Activated naive CD4-positive, alpha-beta T cell treated with anti-CD3 and anti-CD28 coated beads for 36 hours (primary cell): ENCODE measurements at regions of chr2 and their contacts with region 1.

Region 1: GRCh38 chr2:159712143-159712928 is at the start of gene MARCHF7:
- DNase-seq: peak; percentile 98
- H3K4me3 Mint-ChIP-seq: peak within 1 kb of the TSS; percentile 99
- H3K27ac Mint-ChIP-seq: peak within 1 kb of the TSS; percentile 100
- H3K4me1 Mint-ChIP-seq: peaks cover 44% of the 10 kb centered on the region
- H3K27me3 Mint-ChIP-seq: no peaks in the 10 kb centered on the region
- total RNA-seq, gene MARCHF7: 81.5 to 82.4 TPM

Region 2: GRCh38 chr2:158889135-158889853 is 823.0 kb before region 1 on chr2:
- CTCF ChIA-PET with region 1: no interaction called
- intact Hi-C with region 1: loop called (anchors 2 kb)
- DNase-seq: peak; percentile 12
- H3K4me3 Mint-ChIP-seq: no peak overlapping the region
- H3K27ac Mint-ChIP-seq: peak overlapping the region; percentile 21
- H3K4me1 Mint-ChIP-seq: peaks cover 19% of the 10 kb centered on the region
- H3K27me3 Mint-ChIP-seq: peaks cover 6% of the 10 kb centered on the region

Region 3: DNA sequence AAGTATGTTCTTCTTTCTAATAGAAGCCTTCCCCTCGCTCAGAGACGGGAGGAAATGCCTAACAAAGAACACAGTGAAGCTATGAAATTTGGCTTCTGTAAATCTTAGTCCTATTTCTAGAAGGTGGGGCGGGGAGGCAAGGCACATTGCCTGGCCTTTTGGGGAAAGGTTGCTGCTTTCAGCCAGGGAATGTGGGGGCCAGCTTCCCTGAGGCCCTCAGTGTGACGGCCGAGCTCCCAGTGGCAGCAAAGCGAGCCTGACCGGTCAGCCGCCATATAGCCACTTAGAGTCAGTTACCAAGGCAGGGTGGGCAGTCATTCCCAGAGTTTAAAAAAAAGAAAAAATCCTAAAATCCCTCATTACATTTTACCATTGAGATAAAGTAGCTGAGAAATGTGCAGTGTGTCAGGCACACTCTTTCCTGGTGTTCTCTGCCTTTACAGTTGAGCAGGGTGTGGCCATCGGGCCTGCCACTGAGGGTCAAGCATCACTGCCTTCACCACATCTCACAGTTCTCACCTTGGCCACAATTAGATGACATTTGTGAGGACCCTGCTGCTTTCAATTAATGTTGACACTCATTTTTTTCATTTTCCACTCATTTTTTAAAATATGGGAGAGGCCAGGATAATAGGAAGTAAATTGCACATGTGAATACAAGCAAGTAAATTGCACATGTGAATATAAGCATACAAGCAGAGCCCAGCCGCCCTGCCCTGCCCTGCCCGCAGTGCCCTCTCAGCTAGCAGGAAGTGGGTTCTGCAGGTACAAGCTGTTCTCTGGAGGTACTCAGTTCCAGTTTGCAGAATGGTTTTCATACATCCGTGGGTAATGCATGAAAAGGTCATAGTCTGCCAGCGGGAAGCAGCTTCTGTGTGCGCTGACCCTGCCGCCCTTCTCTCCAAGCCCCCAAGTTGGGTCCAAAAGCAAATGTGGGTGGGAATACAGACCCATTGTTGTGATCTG is 502.7 kb before region 1 on chr2:
- CTCF ChIA-PET with region 1: no interaction called
- intact Hi-C with region 1: loop called (anchors 5 kb)
- DNase-seq: peak; percentile 43
- H3K4me3 Mint-ChIP-seq: no peak overlapping the region
- H3K27ac Mint-ChIP-seq: no peak overlapping the region
- H3K4me1 Mint-ChIP-seq: peaks cover 17% of the 10 kb centered on the region
- H3K27me3 Mint-ChIP-seq: no peaks in the 10 kb centered on the region

Region 4: DNA sequence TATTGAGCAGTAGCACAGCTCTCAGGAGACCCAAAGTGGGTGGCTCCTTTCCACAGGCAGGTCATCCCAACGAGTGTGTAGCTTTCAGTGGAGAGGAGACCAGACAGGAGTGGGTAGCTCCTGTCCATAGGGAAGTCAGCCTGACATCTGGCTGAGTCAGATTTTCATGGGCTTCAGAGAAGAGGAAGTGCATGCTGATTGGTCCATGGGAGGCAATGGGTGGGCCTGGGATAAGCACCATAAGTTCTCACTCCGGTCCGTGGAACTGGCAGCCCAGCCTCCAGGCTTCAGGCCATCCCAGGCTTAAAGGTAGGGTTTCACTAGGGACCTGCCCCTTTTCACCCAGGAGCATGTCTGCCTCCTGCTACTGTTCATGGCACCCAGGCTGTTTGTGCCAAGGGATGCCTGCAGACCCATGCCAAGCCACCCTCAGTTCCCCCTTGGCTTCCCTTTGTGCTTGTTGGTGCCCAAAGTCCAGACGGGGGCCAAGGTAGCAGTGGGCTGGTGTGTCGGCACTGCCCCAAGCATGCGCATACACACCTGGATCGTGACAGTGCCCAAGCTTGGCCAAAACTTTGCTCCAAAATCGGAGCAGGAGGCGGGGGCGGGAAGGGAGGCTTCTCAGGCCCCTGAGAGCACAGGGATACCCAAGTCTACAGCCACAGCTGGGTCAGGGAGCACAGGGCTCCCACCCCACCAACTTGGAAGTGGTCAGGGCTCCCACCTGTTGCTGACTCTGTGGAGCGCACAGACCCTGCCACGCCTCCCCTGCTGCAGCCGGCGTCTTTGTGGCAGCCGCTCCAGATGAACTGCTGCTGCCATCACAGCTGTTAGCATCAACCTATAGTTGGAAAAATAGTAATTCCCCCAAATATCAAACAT is 26.4 kb after region 1 on chr2:
- CTCF ChIA-PET with region 1: no interaction called
- intact Hi-C with region 1: no loop called
- DNase-seq: no peak
- H3K4me3 Mint-ChIP-seq: no peak overlapping the region
- H3K27ac Mint-ChIP-seq: no peak overlapping the region
- H3K4me1 Mint-ChIP-seq: peaks cover 31% of the 10 kb centered on the region
- H3K27me3 Mint-ChIP-seq: no peaks in the 10 kb centered on the region

Region 5: DNA sequence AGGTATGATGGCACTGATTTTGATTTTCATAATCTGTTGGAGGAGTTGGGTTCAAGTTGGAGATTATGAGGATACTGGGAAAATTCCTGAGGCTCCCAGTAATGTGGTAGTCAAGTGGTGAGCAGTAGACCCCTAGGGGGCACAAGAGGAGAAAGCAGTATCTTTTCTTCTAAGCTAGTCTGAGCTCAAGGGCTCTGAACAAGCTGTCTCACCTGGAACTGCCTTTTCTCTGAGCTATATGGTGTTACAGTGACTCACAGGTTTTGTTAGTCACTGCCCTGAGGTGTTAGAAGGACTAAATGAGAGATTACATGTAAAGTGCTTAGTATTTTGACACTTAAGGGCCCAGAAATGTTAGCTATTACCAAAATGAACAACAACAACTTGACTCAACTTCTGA is 43.5 kb after region 1 on chr2:
- CTCF ChIA-PET with region 1: interaction called, 4 read pairs
- intact Hi-C with region 1: loop called (anchors 1 kb)
- DNase-seq: peak; percentile 54
- H3K4me3 Mint-ChIP-seq: no peak overlapping the region
- H3K27ac Mint-ChIP-seq: no peak overlapping the region
- H3K4me1 Mint-ChIP-seq: peaks cover 22% of the 10 kb centered on the region
- H3K27me3 Mint-ChIP-seq: no peaks in the 10 kb centered on the region

Region 6: GRCh38 chr2:159960383-159960782 is 248.0 kb after region 1 on chr2:
- CTCF ChIA-PET with region 1: no interaction called
- intact Hi-C with region 1: loop called (anchors 2 kb)
- DNase-seq: no peak
- H3K4me3 Mint-ChIP-seq: no peak overlapping the region
- H3K27ac Mint-ChIP-seq: no peak overlapping the region
- H3K4me1 Mint-ChIP-seq: peaks cover 18% of the 10 kb centered on the region
- H3K27me3 Mint-ChIP-seq: peaks cover 4% of the 10 kb centered on the region

Region 7: DNA sequence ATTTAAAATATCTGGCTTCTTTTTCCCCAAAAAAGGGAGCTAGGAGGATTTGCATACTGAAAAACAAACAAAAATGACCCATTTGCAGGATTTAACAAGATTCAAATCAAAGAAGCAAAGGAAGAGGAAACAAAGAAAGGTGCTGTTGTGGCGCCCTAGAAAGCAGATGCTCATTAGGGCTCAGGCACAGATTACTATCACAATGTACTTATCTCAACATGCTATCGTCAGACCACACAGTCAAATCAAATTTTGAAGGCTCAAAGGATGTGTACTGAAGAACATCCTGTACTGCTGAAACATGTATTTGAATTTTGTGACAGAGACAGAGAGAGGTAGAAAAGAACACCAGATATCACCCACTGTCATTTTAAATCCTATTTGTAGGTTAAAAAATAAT is 770.3 kb after region 1 on chr2:
- CTCF ChIA-PET with region 1: no interaction called
- intact Hi-C with region 1: no loop called
- DNase-seq: peak; percentile 46
- H3K4me3 Mint-ChIP-seq: peak overlapping the region; percentile 47
- H3K27ac Mint-ChIP-seq: peak overlapping the region; percentile 85
- H3K4me1 Mint-ChIP-seq: peaks cover 71% of the 10 kb centered on the region
- H3K27me3 Mint-ChIP-seq: no peaks in the 10 kb centered on the region

Region 8: GRCh38 chr2:161160226-161161069 is 1448.1 kb after region 1 on chr2 and contains the start of gene TANK:
- CTCF ChIA-PET with region 1: no interaction called
- intact Hi-C with region 1: loop called (anchors 5 kb)
- DNase-seq: peak; percentile 94
- H3K4me3 Mint-ChIP-seq: peak within 1 kb of the TSS; percentile 96
- H3K27ac Mint-ChIP-seq: peak within 1 kb of the TSS; percentile 99
- H3K4me1 Mint-ChIP-seq: peaks cover 48% of the 10 kb centered on the region
- H3K27me3 Mint-ChIP-seq: no peaks in the 10 kb centered on the region
- total RNA-seq, gene TANK: 48.6 to 50.4 TPM